AG04449 (cell line): ENCODE measurements at regions of chr2 and their contacts with region 1.

Region 1: GRCh38 chr2:61658841-61659780 is 121.0 kb upstream of the XPO1 start:
- DNase-seq: no peak
- H3K4me3 ChIP-seq: no peak overlapping the region
- CTCF ChIP-seq: peak; percentile 32

Region 2: DNA sequence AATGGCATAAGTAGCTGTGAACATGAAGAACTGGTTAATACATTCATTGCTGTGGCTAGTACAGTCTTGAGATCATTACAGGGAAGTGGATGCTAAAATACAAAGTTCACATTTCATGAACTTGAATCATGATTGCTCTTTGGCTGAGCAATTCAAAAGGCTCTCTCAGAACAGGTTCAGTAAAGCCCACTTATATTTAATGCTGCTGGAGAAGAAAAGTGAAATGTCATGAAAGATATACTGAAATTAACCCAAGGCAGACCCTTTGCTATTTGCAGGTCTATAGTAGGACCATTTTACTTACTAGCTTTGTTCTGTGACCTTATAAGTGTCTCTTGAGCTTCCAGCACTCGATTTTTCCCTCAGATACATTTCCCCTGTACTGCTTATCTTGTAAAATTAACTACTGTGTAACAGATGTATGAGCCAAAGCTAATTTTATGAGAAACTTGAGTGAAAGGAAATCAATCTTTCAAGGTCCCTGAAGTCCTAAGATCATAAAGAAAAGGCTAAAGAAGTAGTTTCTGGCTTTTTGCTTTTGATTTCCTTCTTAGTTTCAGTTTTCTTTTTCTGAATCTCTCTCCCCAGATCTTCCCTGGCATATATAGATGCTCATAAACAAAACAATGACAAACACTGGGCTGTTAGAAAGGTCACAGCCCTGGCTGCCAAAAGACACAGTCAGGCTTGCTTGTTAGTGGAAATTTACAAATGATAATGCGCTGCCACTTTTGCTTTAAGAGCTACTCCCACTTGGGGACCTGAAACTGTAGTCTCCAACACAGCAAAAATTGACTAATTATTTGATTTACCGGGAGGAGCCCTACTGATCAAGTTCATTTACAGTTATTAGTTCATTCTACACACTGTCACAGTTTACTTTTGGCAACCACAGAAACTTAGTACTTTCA is 11.7 kb after region 1 on chr2:
- CTCF ChIA-PET with region 1: interaction called, 17 read pairs
- POLR2A ChIA-PET with region 1: no interaction called
- DNase-seq: no peak
- H3K4me3 ChIP-seq: no peak overlapping the region
- CTCF ChIP-seq: no peak

Region 3: GRCh38 chr2:61742955-61743354 is 83.8 kb after region 1 on chr2:
- CTCF ChIA-PET with region 1: no interaction called
- POLR2A ChIA-PET with region 1: no interaction called
- DNase-seq: no peak
- H3K4me3 ChIP-seq: no peak overlapping the region
- CTCF ChIP-seq: no peak